GM12878 (cell line): ENCODE measurements at regions of chr13 and their contacts with region 1.

Region 1: GRCh38 chr13:30371649-30372265 is 50.5 kb upstream of the UBE2L5 start:
- DNase-seq: peak; percentile 96
- ATAC-seq: peak; percentile 74
- H3K4me3 ChIP-seq: peak overlapping the region; percentile 12; the same call in 1 of the 2 replicates
- H3K27ac ChIP-seq: peak overlapping the region; percentile 73
- H3K4me1 ChIP-seq: peaks cover 62% of the 10 kb centered on the region
- H3K27me3 ChIP-seq: no peaks in the 10 kb centered on the region
- CTCF ChIP-seq: peak in 1 of 3 experiments; percentile 6; a peak in 1 of 6 replicates
- EP300 ChIP-seq: peak; percentile 96 to 97
- POLR2A ChIP-seq: no peak
- RAD21 ChIP-seq: 0 out of 2 replicates have a peak, but pooled peaks have one; percentile 1

Region 2: GRCh38 chr13:30306762-30307193 is 65.0 kb before region 1 on chr13:
- CTCF ChIA-PET with region 1: interaction called, 3 read pairs
- POLR2A ChIA-PET with region 1: interaction called, 3 read pairs
- RAD21 ChIA-PET with region 1: interaction called, 6 read pairs
- SMC1A ChIA-PET with region 1: interaction called, 11 read pairs
- in situ Hi-C with region 1: no loop called
- intact Hi-C with region 1: loop called (anchors 2 kb)
- DNase-seq: peak; percentile 66
- ATAC-seq: peak; percentile 89
- H3K4me3 ChIP-seq: peak overlapping the region; percentile 67
- H3K27ac ChIP-seq: peak overlapping the region; percentile 74
- H3K4me1 ChIP-seq: peaks cover 18% of the 10 kb centered on the region
- H3K27me3 ChIP-seq: no peaks in the 10 kb centered on the region
- CTCF ChIP-seq: no peak
- EP300 ChIP-seq: no peak
- POLR2A ChIP-seq: peak; percentile 71
- RAD21 ChIP-seq: no peak

Region 3: GRCh38 chr13:30388406-30389283 is 16.9 kb after region 1 on chr13:
- CTCF ChIA-PET with region 1: interaction called, 18 read pairs
- POLR2A ChIA-PET with region 1: interaction called, 76 read pairs
- RAD21 ChIA-PET with region 1: interaction called, 105 read pairs
- SMC1A ChIA-PET with region 1: interaction called, 143 read pairs
- in situ Hi-C with region 1: no loop called
- intact Hi-C with region 1: no loop called
- DNase-seq: no peak
- ATAC-seq: no peak
- H3K4me3 ChIP-seq: no peak overlapping the region
- H3K27ac ChIP-seq: no peak overlapping the region
- H3K4me1 ChIP-seq: no peaks in the 10 kb centered on the region; the same call in 1 of the 2 replicates
- H3K27me3 ChIP-seq: no peaks in the 10 kb centered on the region
- CTCF ChIP-seq: no peak
- EP300 ChIP-seq: no peak
- POLR2A ChIP-seq: no peak
- RAD21 ChIP-seq: no peak

Region 4: GRCh38 chr13:30408319-30409101 is 36.8 kb after region 1 on chr13:
- CTCF ChIA-PET with region 1: interaction called, 7 read pairs
- POLR2A ChIA-PET with region 1: interaction called, 3 read pairs
- RAD21 ChIA-PET with region 1: interaction called, 6 read pairs
- SMC1A ChIA-PET with region 1: interaction called, 37 read pairs
- in situ Hi-C with region 1: no loop called
- intact Hi-C with region 1: no loop called
- DNase-seq: no peak
- ATAC-seq: peak; percentile 97
- H3K4me3 ChIP-seq: no peak overlapping the region; the same call in 1 of the 2 replicates
- H3K27ac ChIP-seq: no peak overlapping the region
- H3K4me1 ChIP-seq: peaks cover 6% of the 10 kb centered on the region
- H3K27me3 ChIP-seq: no peaks in the 10 kb centered on the region
- CTCF ChIP-seq: peak; percentile 56 to 86 (median 74)
- EP300 ChIP-seq: 0 out of 4 replicates have a peak, but pooled peaks of 1 of the 2 experiments have one; percentile 22
- POLR2A ChIP-seq: peak; percentile 62
- RAD21 ChIP-seq: peak; percentile 72

Region 5: GRCh38 chr13:30422054-30422839 is 50.5 kb after region 1 on chr13 and contains the start of gene UBE2L5:
- CTCF ChIA-PET with region 1: no interaction called
- POLR2A ChIA-PET with region 1: interaction called, 5 read pairs
- RAD21 ChIA-PET with region 1: interaction called, 14 read pairs
- SMC1A ChIA-PET with region 1: interaction called, 27 read pairs
- in situ Hi-C with region 1: no loop called
- intact Hi-C with region 1: no loop called
- DNase-seq: no peak
- ATAC-seq: peak; percentile 95
- H3K4me3 ChIP-seq: peak within 1 kb of the TSS; percentile 82
- H3K27ac ChIP-seq: peak within 1 kb of the TSS; percentile 50
- H3K4me1 ChIP-seq: peaks cover 2% of the 10 kb centered on the region; the same call in 1 of the 2 replicates
- H3K27me3 ChIP-seq: no peaks in the 10 kb centered on the region
- CTCF ChIP-seq: no peak
- EP300 ChIP-seq: no peak
- POLR2A ChIP-seq: peak; percentile 75
- RAD21 ChIP-seq: no peak
- polyA plus RNA-seq, gene UBE2L5: 0.03 to 0.11 TPM

Region 6: GRCh38 chr13:30443957-30444404 is 72.2 kb after region 1 on chr13:
- CTCF ChIA-PET with region 1: interaction called, 9 read pairs
- POLR2A ChIA-PET with region 1: interaction called, 49 read pairs
- RAD21 ChIA-PET with region 1: interaction called, 84 read pairs
- SMC1A ChIA-PET with region 1: interaction called, 62 read pairs
- in situ Hi-C with region 1: no loop called
- intact Hi-C with region 1: no loop called
- DNase-seq: no peak
- ATAC-seq: peak; percentile 62
- H3K4me3 ChIP-seq: peak overlapping the region; percentile 26; the same call in 1 of the 2 replicates
- H3K27ac ChIP-seq: peak overlapping the region; percentile 56
- H3K4me1 ChIP-seq: peaks cover 43% of the 10 kb centered on the region
- H3K27me3 ChIP-seq: no peaks in the 10 kb centered on the region
- CTCF ChIP-seq: no peak
- EP300 ChIP-seq: 0 out of 4 replicates have a peak, but pooled peaks of 1 of the 2 experiments have one; percentile 5
- POLR2A ChIP-seq: no peak
- RAD21 ChIP-seq: 0 out of 2 replicates have a peak, but pooled peaks have one; percentile 4

Region 7: DNA sequence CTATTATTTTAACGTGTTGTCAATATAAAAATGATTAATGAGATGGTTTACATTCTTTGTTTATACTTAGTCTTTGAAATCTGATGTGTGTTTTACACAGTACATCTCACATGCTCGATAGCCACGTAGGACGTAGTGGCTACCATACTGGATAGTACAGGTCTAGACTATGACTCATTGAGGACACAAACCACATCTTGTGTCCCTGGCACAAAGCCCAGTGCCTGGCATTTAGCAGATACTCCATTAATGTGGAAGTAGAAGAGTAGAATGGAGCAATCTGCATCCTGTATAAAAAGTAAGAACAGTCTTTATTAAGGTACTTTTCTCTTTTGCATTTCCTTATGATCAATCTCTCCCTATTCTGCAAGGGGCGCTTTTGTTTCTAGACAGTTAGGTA is 1610.8 kb after region 1 on chr13:
- CTCF ChIA-PET with region 1: no interaction called
- POLR2A ChIA-PET with region 1: no interaction called
- RAD21 ChIA-PET with region 1: no interaction called
- SMC1A ChIA-PET with region 1: no interaction called
- in situ Hi-C with region 1: no loop called
- intact Hi-C with region 1: no loop called
- DNase-seq: no peak
- ATAC-seq: no peak
- H3K4me3 ChIP-seq: no peak overlapping the region
- H3K27ac ChIP-seq: no peak overlapping the region
- H3K4me1 ChIP-seq: no peaks in the 10 kb centered on the region
- H3K27me3 ChIP-seq: no peaks in the 10 kb centered on the region
- CTCF ChIP-seq: no peak
- EP300 ChIP-seq: no peak
- POLR2A ChIP-seq: no peak
- RAD21 ChIP-seq: no peak